ENCODE measurements at regions of chr5 and their contacts with region 1.

Region 1: GRCh38 chr5:77426670-77427069 is 65.4 kb downstream of the WDR41 start:
- DNase-seq: no peak
- H3K4me3 ChIP-seq: no peak overlapping the region
- H3K27ac ChIP-seq: peak overlapping the region; percentile 80 to 97
- H3K4me1 ChIP-seq: peaks cover 18 to 51% of the 10 kb centered on the region in 2 donors
- H3K27me3 ChIP-seq: no peaks in the 10 kb centered on the region
- CTCF ChIP-seq: no peak

Region 2: DNA sequence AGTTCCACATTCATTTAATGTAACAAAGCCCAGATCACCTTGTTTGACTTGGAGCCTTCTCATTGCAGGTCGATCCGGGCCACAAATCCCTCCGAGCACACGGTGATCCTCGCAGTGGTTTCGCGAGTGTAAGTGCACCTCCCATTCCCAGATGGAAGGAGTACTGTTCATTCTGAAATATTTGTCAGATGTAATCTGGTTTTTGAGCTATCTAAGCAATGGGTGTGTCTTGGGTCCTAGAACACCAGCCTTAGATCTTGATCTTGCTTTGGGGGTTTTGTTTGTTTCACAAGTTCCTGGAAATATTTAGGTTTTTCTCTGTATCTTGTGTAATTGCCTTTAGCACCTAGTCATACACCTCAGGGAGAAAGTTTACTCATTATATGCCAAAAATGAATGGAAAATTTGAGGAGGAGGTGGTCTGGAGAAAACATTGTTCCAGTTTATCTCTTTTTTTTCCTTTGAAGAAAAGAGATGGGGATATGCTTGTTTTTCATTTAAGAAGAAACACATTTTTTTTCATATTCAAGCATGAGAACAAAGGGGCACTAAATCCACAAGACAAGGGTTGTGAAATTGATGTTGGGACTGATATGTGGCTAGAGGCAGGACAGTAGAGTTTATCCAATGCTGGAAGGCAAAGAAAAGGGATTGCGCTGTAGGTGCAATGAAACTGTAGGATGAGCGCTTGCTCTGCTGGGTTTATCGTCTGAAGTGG is 97.6 kb before region 1 on chr5:
- intact Hi-C with region 1: loop called (anchors 5 kb)
- DNase-seq: no peak
- H3K4me3 ChIP-seq: no peak overlapping the region
- H3K27ac ChIP-seq: peak overlapping the region; percentile 66 to 75
- H3K4me1 ChIP-seq: peaks cover 4 to 29% of the 10 kb centered on the region in 2 donors
- H3K27me3 ChIP-seq: no peaks in the 10 kb centered on the region
- CTCF ChIP-seq: no peak

Region 3: GRCh38 chr5:77367733-77368132 is 58.9 kb before region 1 on chr5:
- intact Hi-C with region 1: loop called (anchors 5 kb)
- DNase-seq: peak; percentile 61 to 90
- H3K4me3 ChIP-seq: no peak overlapping the region
- H3K27ac ChIP-seq: peak overlapping the region; percentile 65 to 73
- H3K4me1 ChIP-seq: peaks cover 0 to 23% of the 10 kb centered on the region in 2 donors
- H3K27me3 ChIP-seq: no peaks in the 10 kb centered on the region
- CTCF ChIP-seq: no peak